Left ventricle myocardium inferior (tissue), 1 donor: ENCODE measurements at regions of chr2 and their contacts with region 1.

Region 1: DNA sequence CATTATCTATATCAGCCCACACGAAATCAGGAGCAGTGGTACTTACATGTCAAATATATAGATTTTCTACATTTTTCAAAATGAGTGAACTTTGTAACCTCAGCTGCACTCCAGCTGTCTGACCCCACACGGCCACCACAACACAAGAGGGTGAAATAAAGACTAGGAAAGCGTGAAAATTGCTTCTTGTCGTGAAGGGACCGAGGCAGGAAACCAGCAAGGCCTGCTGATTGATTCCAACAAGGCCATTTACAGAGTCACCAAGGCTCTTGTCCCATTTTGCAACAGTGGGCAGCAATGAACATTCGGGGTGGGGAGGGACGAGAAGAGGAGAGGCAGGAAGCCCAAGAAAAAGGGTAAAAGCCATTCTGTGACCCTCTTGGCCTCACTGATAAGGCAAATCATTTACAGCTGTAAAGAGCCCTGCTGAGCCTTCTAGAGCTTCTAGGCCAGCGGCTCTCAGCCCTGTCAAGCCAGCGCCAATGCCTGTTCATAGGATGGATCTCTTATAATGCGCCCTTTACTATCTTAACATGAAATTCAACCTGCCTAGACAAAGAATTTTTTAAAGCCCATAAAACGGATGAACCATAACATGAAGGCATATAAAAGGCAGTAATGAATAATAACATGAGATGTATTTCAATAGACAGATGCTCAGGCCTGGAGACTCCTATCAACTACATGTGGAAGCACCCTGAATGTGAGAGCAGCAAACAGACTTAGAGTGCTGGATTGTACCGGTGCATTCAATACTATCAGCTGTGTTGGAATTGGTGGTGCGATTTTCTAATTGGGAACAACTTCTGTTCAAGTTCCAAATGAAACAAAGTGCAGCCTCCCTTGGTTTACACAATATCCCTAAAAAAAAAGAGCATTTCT is 269.0 kb downstream of the CDCA7 start:
- DNase-seq: no peak
- H3K4me3 ChIP-seq: no peak overlapping the region
- H3K27ac ChIP-seq: no peak overlapping the region
- H3K4me1 ChIP-seq: no peaks in the 10 kb centered on the region
- H3K27me3 ChIP-seq: peaks cover 11% of the 10 kb centered on the region
- CTCF ChIP-seq: no peak

Region 2: DNA sequence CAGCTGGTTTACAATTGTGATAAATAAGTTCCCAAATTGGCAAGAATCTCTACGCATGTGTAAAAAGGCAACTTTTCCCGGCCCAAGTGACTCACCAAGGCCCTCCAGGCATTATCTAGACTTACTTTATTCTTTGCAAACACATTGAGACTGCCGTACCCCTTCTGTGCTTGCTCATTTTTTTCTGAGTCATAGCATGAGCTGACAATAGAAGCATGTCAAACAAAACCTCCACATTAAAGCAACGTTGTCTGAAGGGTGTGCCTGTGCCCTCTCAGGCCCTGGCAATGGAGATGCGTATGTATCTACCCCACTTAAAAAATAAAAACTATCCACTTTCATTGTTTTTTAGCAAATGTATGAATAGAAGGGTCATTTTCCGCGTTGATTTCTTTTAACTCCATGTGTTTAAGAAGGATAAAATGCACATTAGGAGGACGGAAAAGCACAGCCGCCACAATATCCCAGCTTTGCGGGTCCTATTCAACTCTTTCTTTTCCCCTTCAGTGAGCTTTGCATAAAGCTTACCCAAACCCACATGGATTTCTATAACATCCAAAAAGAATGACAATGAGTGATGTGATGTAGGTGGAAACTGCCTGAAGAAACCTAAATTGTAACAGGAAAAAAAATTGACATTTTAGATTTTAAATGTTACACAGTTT is 29.2 kb after region 1 on chr2:
- intact Hi-C with region 1: loop called (anchors 2 kb)
- DNase-seq: no peak
- H3K4me3 ChIP-seq: no peak overlapping the region
- H3K27ac ChIP-seq: no peak overlapping the region
- H3K4me1 ChIP-seq: no peaks in the 10 kb centered on the region
- H3K27me3 ChIP-seq: peaks cover 14% of the 10 kb centered on the region
- CTCF ChIP-seq: no peak

Region 3: GRCh38 chr2:173783382-173783781 is 159.7 kb after region 1 on chr2:
- intact Hi-C with region 1: no loop called
- DNase-seq: no peak
- H3K4me3 ChIP-seq: no peak overlapping the region
- H3K27ac ChIP-seq: no peak overlapping the region
- H3K4me1 ChIP-seq: no peaks in the 10 kb centered on the region
- H3K27me3 ChIP-seq: peaks cover 21% of the 10 kb centered on the region
- CTCF ChIP-seq: no peak

Region 4: GRCh38 chr2:174059178-174059874 is 435.6 kb after region 1 on chr2:
- intact Hi-C with region 1: no loop called
- DNase-seq: no peak
- H3K4me3 ChIP-seq: no peak overlapping the region
- H3K27ac ChIP-seq: no peak overlapping the region
- H3K4me1 ChIP-seq: peaks cover 15% of the 10 kb centered on the region
- H3K27me3 ChIP-seq: no peaks in the 10 kb centered on the region
- CTCF ChIP-seq: no peak